Activated CD4-positive, alpha-beta T cell treated with anti-CD3 and anti-CD28 coated beads for 36 hours (primary cell): ENCODE measurements at regions of chr2 and their contacts with region 1.

Region 1: GRCh38 chr2:70887550-70888246 is 48.0 kb upstream of the ATP6V1B1 start:
- DNase-seq: peak; percentile 71
- ATAC-seq: peak; percentile 65
- H3K4me3 Mint-ChIP-seq: peak overlapping the region; percentile 62
- H3K27ac Mint-ChIP-seq: no peak overlapping the region
- H3K4me1 Mint-ChIP-seq: peaks cover 31% of the 10 kb centered on the region
- H3K27me3 Mint-ChIP-seq: peaks cover 75% of the 10 kb centered on the region

Region 2: GRCh38 chr2:70901227-70902066 is 13.7 kb after region 1 on chr2:
- CTCF ChIA-PET with region 1: no interaction called
- POLR2A ChIA-PET with region 1: no interaction called
- intact Hi-C with region 1: loop called (anchors 1 to 2 kb)
- DNase-seq: peak; percentile 31
- ATAC-seq: no peak
- H3K4me3 Mint-ChIP-seq: peak overlapping the region; percentile 48
- H3K27ac Mint-ChIP-seq: no peak overlapping the region
- H3K4me1 Mint-ChIP-seq: peaks cover 24% of the 10 kb centered on the region
- H3K27me3 Mint-ChIP-seq: peaks cover 86% of the 10 kb centered on the region

Region 3: GRCh38 chr2:70907130-70908057 is 19.7 kb after region 1 on chr2:
- CTCF ChIA-PET with region 1: interaction called, 3 read pairs
- POLR2A ChIA-PET with region 1: no interaction called
- intact Hi-C with region 1: loop called in 1 of 2 experiments (anchors 2 kb)
- DNase-seq: no peak
- ATAC-seq: no peak
- H3K4me3 Mint-ChIP-seq: peak overlapping the region; percentile 54
- H3K27ac Mint-ChIP-seq: no peak overlapping the region
- H3K4me1 Mint-ChIP-seq: peaks cover 9% of the 10 kb centered on the region
- H3K27me3 Mint-ChIP-seq: peaks cover 69% of the 10 kb centered on the region

Region 4: DNA sequence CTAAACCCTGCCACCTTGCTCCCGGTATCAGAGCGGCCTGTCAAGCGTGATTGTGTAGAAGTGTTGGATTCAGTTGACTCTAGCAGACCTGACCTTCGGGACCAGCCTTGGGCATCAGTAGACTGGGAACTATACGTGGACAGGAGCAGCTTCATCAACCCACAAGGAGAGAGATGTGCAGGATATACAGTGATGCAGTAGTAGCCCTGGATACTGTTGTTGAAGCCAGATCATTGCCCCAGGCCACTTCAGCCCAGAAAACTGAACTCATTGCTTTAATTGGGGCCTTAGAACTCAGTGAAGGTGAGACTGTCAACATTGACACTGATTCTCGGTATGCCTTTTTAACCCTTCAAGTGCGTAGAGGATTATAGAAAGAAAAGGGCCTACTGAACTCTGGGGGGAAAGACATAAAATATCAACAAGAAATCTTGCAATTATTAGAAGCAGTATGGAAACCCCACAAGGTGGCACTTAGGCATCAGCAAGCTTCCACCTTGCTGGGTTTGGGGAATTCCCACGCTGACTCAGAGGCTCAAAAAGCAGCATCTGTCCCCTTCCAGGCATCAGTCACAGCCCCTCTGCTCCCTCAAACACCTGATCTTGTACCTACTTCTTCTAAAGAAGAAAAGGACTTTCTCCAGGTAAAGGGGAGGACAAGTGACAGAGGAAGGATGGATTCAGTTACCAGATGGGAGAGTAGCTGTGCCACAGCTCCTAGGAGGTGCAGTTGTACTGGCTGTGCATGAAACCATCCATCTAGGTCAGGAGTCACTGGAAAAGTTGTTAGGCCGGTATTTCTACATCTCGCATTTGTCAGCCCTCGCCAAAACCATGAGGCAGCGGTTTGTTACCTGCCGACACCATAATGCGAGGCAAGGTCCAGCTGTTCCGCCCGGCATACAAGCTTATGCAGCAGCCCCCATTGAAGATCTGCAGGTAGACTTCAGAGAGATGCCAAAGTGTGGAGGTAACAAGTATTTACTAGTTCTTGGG is 162.0 kb after region 1 on chr2:
- CTCF ChIA-PET with region 1: no interaction called
- POLR2A ChIA-PET with region 1: no interaction called
- intact Hi-C with region 1: no loop called
- DNase-seq: peak; percentile 82
- ATAC-seq: peak; percentile 81
- H3K4me3 Mint-ChIP-seq: no peak overlapping the region
- H3K27ac Mint-ChIP-seq: peak overlapping the region; percentile 37
- H3K4me1 Mint-ChIP-seq: peaks cover 13% of the 10 kb centered on the region
- H3K27me3 Mint-ChIP-seq: no peaks in the 10 kb centered on the region

Region 5: GRCh38 chr2:71395471-71395870 is 507.8 kb after region 1 on chr2:
- CTCF ChIA-PET with region 1: no interaction called
- POLR2A ChIA-PET with region 1: no interaction called
- intact Hi-C with region 1: no loop called
- DNase-seq: no peak
- ATAC-seq: no peak
- H3K4me3 Mint-ChIP-seq: no peak overlapping the region
- H3K27ac Mint-ChIP-seq: no peak overlapping the region
- H3K4me1 Mint-ChIP-seq: peaks cover 2% of the 10 kb centered on the region
- H3K27me3 Mint-ChIP-seq: no peaks in the 10 kb centered on the region